PC-3 (cell line): ENCODE measurements at regions of chr16 and their contacts with region 1.

Region 1: DNA sequence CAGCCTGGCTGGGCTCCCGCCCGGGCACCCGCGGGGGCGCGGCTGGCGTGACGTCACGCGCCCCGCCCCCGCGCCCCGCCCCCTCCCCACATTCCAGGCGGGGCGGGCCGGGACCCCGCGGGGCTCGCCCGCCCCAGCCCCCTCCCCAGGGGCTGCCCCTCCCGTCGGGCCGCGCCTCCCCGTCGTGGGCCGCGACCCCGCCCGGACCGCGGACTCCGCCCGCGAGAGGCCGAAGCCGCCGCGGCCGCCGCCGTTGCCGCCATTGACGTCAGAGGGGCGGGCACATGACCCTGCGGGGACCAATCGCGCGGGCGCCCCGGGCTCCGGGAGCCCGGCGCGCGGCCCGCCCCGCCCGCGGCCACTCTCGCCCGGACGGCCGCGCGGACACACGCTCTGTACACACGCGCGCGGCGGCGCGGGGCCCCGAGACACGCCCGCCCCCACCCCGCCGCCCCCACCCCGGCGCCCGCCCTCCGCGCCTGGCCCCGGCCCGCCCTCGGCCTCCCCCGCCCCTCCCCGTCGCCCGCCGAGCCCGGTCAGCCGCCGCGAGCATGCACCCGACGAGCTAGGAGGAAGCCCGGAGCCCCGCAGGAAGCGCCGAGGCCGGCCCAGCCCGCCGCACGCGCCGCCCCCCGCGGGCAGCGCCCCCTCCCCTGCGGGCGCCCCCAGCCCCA is at the start of gene CMIP:
- DNase-seq: peak; percentile 79
- ATAC-seq: peak; percentile 61
- H3K4me3 ChIP-seq: peak within 1 kb of the TSS; percentile 98
- H3K27ac ChIP-seq: peak within 1 kb of the TSS; percentile 83
- H3K4me1 ChIP-seq: peaks cover 23% of the 10 kb centered on the region
- H3K27me3 ChIP-seq: no peaks in the 10 kb centered on the region
- CTCF ChIP-seq: no peak
- total RNA-seq, gene CMIP: 25.7 and 43.7 TPM in 2 replicates

Region 2: GRCh38 chr16:81424771-81425170 is 19.8 kb before region 1 on chr16:
- CTCF ChIA-PET with region 1: no interaction called
- POLR2A ChIA-PET with region 1: no interaction called
- intact Hi-C with region 1: no loop called
- DNase-seq: peak; percentile 39
- ATAC-seq: no peak; the same call in 1 of the 2 replicates
- H3K4me3 ChIP-seq: no peak overlapping the region
- H3K27ac ChIP-seq: no peak overlapping the region
- H3K4me1 ChIP-seq: no peaks in the 10 kb centered on the region
- H3K27me3 ChIP-seq: no peaks in the 10 kb centered on the region
- CTCF ChIP-seq: no peak

Region 3: GRCh38 chr16:81500833-81501521 is 56.4 kb after region 1 on chr16:
- CTCF ChIA-PET with region 1: no interaction called
- POLR2A ChIA-PET with region 1: no interaction called
- intact Hi-C with region 1: loop called (anchors 5 kb)
- DNase-seq: peak; percentile 95
- ATAC-seq: peak; percentile 80
- H3K4me3 ChIP-seq: peak overlapping the region; percentile 46
- H3K27ac ChIP-seq: peak overlapping the region; percentile 96
- H3K4me1 ChIP-seq: peaks cover 31% of the 10 kb centered on the region
- H3K27me3 ChIP-seq: no peaks in the 10 kb centered on the region
- CTCF ChIP-seq: no peak

Region 4: DNA sequence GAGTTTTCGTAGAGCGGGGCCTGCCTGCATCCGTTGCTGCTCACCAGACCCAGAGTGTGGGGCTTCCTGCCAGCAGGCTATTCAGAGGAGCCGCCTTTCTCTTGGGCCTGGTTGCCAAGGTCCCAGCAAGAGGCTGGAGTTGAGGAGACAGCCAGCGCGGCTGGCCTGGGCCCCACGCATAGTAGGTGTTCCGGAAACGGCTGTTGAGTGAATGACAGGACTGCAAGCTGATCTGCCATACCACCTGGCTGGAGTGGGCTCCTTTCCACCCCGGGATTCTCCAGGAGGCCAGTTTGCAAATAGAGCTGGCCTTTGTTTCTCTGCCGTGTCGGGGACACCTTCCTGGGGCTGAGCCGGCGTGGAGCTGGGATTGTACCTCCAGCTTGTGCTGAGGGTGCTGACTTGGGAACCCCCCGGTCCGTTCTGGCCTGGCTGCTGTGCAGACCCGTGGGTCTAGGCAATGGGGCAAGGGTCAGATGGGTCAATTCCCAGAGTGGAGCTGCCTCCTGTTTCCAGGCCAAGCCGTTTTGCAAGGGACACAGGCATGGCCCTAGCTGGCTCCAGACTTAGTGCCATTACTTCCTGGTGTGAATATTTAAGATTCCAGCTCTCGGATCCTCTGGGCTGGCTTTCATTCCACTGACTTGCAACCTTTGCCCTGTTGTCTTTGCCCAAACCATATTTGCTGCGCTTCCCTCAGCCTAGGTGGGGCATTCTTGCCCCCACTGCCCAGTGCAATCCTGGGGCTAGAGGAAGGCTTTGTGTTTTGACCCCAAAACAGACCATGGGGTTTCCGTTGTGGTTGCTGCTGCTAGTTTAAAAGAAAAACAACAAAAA is 68.8 kb after region 1 on chr16:
- CTCF ChIA-PET with region 1: no interaction called
- POLR2A ChIA-PET with region 1: no interaction called
- intact Hi-C with region 1: loop called (anchors 2 kb)
- DNase-seq: no peak
- ATAC-seq: no peak
- H3K4me3 ChIP-seq: no peak overlapping the region
- H3K27ac ChIP-seq: peak overlapping the region; percentile 19; the same call in 1 of the 2 replicates
- H3K4me1 ChIP-seq: peaks cover 54% of the 10 kb centered on the region
- H3K27me3 ChIP-seq: no peaks in the 10 kb centered on the region
- CTCF ChIP-seq: no peak

Region 5: DNA sequence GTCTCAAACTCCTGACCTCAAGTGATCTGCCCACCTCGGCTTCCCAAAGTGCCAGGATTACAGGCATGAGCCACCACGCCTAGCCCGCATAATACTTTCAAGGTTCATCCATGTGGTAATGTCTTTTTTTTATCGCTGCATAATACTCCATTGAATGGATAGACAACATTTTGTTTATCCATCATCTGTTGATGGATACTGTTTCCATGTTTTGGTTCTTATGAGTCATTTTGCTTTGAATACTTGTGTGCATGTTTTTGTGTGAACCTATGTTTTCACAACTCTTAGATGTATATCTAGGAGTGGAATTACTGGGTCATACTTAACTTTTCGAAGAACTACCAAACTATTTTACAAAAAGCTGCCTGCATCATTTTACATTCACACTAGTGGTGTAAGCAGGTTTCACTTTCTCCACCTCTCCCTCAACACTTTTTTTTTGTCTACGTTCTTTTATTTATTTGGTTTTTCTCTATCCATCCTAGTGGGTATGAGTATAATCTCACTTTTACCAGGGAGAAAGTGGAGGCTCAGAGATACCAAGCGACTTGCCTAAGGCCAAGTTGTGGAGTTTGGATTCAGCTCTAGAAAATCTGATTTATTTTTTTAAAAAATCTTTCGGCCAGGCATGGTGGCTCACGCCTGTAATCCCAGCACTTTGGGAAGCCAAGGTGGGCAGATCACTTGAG is 151.2 kb after region 1 on chr16:
- CTCF ChIA-PET with region 1: no interaction called
- POLR2A ChIA-PET with region 1: no interaction called
- intact Hi-C with region 1: loop called (anchors 5 kb)
- DNase-seq: no peak
- ATAC-seq: no peak
- H3K4me3 ChIP-seq: no peak overlapping the region
- H3K27ac ChIP-seq: no peak overlapping the region
- H3K4me1 ChIP-seq: peaks cover 29% of the 10 kb centered on the region
- H3K27me3 ChIP-seq: no peaks in the 10 kb centered on the region
- CTCF ChIP-seq: no peak